ENCODE measurements at regions of chr1 and their contacts with region 1.

Region 1: GRCh38 chr1:153465811-153466636 is 5.6 kb upstream of the S100A7 start:
- DNase-seq: peak; percentile 58 to 75
- ATAC-seq: peak; percentile 76 to 94; a peak in 5 of 6 replicates
- H3K4me3 ChIP-seq: no peak overlapping the region
- H3K27ac ChIP-seq: no peak overlapping the region
- H3K4me1 ChIP-seq: no peaks in the 10 kb centered on the region
- CTCF ChIP-seq: peak; percentile 86
- EP300 ChIP-seq: no peak
- POLR2A ChIP-seq: no peak
- RAD21 ChIP-seq: peak; percentile 54 to 58

Region 2: DNA sequence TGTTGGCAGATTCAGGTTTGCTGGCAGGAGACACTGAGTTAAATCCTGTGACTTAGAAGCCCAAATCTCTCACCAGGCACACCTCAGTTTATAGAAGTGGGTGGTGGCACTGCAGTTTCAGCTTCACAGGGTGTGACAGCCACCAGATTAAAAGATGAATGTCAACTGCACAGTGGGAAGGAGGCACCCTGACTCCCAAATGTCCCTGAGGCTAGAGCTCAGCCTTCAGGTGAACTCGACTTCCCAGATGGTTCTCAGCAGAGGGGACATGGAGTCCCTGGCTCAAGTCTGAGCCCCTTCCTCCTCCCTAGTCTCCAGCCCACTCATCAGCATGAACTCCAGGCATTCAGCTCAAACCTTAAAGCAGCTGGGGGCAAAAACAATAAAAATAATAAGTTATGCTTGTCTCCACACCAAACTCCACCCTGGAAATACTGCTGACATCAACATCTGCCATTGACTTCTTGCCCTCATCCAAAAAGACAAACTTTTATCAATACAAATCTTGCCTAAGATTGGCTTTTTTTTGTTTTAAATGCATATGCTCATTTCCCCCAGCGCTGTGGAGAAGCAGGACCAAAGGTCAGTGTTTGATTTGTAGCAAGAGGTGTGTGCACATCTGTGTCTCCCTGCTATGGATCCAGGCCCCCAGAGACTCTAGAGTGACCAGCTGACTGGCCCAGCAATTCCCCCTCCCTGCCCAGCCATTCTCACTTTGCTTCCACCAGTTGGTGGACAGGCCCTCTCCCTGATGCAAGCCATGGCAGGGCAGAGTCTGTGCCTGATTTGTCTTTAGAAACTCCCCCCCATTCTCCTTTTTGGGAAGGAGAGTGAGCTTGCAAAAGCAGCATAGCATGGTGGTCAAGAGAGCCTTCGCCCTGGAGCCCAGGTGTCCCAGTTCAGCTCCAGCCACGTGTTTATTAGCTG is 12.9 kb after region 1 on chr1:
- CTCF ChIA-PET with region 1: interaction called, 39 read pairs
- POLR2A ChIA-PET with region 1: no interaction called
- DNase-seq: no peak
- ATAC-seq: no peak; a peak in 1 of 6 replicates
- H3K4me3 ChIP-seq: no peak overlapping the region
- H3K27ac ChIP-seq: no peak overlapping the region
- H3K4me1 ChIP-seq: peaks cover 16% of the 10 kb centered on the region
- CTCF ChIP-seq: no peak
- EP300 ChIP-seq: no peak
- POLR2A ChIP-seq: no peak
- RAD21 ChIP-seq: no peak

Region 3: DNA sequence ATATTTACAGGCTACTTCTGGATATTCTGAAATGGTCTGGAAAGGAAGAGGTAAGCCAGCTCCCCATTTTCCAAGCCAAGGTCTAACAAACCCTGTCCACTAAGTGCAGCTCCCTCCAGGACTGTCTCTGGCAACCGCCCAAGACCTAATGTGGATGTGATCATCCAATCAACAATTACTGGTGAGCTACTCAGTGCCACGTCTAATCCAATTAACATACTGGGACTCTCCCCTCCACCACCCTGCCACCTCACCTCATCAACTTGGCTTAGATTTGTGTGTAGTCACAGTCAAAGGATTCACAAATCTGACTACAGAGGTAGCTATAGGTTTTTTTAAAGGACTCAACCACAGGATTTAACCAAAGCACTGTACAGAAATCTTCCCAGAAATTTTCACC is 19.8 kb after region 1 on chr1:
- CTCF ChIA-PET with region 1: interaction called, 39 read pairs
- POLR2A ChIA-PET with region 1: no interaction called
- DNase-seq: no peak
- ATAC-seq: no peak
- H3K4me3 ChIP-seq: no peak overlapping the region
- H3K27ac ChIP-seq: no peak overlapping the region
- H3K4me1 ChIP-seq: peaks cover 16% of the 10 kb centered on the region
- CTCF ChIP-seq: no peak
- EP300 ChIP-seq: no peak
- POLR2A ChIP-seq: no peak
- RAD21 ChIP-seq: no peak